Tibial artery (tissue), 4 donors: ENCODE measurements at regions of chr21 and their contacts with region 1.

Region 1: DNA sequence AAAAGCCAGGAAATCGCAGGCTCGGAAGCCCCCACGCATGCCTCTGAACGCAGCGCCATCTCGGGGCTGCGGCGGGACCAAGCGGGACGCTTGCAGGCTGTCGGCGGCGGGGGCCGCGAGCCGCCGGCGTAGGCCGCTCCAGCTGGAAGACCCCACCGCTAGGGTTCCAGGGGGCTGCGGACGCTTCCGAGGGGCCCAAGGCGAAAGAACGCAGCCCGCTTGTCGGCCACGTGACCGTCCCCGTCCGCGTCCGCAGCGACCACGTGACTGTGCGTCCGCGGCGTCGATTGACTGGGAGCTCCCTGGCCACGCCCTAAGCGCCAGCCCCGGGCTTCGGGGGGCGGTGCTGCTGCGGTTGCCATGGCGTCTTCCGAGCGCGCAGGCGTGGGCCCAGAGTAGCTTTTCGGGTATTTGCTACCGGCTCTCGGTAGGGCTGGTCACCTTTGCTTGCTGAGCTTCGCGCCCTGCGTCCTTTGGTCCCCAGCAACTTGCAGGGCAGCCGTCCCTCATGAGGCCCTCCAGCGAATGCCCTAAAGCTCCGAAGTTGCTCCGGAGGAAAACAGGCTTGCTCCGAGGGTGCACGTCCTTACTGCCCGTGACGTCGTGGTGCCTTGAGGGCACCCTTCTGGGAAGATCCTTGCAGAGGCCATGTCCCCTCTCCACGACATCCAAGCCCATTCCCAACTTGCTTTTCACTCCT is 197.2 kb downstream of the DYRK1A start:
- DNase-seq: peak; percentile 93 to 96
- H3K4me3 ChIP-seq: peak overlapping the region; percentile 63 to 70
- H3K27ac ChIP-seq: peak overlapping the region; percentile 84 to 86
- H3K4me1 ChIP-seq: peaks cover 0 to 21% (median 16%) of the 10 kb centered on the region in 4 donors
- H3K27me3 ChIP-seq: no peaks in the 10 kb centered on the region
- CTCF ChIP-seq: peak; percentile 44 to 47

Region 2: DNA sequence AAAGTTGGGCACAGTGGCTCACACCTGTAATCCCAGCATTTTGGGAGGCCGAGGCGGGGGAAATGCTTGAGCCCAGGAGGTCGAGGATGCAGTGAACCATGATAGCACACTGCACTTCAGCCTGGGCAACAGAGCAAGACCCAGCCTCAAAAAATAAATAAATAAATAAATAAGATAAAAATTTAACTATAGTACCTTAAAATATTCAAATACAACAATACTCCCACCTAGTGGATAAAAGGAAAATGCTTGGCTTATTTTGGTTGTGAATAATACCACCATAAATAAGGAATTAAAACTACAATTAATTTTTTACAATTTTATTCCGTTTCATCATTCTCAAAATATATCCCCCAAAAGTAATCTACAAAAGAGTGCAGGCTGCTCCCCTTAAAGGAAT is 1611.4 kb after region 1 on chr21:
- intact Hi-C with region 1: loop called (anchors 10 kb)
- DNase-seq: no peak
- H3K4me3 ChIP-seq: no peak overlapping the region
- H3K27ac ChIP-seq: no peak overlapping the region
- H3K4me1 ChIP-seq: no peaks in the 10 kb centered on the region
- H3K27me3 ChIP-seq: no peaks in the 10 kb centered on the region
- CTCF ChIP-seq: peak in 1 of 2 experiments; percentile 49